ENCODE measurements at regions of chr13 and their contacts with region 1.

Region 1: DNA sequence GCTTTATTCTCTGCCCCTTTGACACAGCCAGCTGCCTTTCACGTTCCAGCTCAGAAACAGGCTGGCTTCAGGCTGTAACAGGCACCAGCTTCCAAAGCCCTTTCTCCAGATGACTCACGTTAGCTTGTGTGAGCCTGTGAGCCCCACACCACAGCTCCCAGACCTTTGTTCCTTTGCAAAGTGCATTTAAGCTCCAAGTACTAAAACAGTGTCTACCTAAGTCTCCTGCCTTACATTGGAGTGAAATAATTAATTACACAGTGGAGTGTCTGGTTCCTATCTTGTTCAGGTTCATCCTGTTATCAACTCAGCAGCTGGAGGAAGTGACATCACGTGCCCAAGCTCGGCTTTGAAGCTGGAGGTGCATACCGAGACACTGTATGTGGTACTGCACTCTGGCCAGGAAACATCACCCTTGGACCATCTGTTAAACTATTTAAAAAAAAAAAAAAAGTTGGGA is 475.8 kb downstream of the FOXO1 start:
- DNase-seq: peak in 4 of 5 donors; percentile 30 to 65 (median 49)
- ATAC-seq: peak; percentile 43 to 72 (median 58)
- H3K4me3 ChIP-seq: no peak overlapping the region
- H3K27ac ChIP-seq: peak overlapping the region; percentile 36 to 84 (median 70)
- H3K4me1 ChIP-seq: peaks cover 5 to 52% (median 39%) of the 10 kb centered on the region in 12 donors
- H3K27me3 ChIP-seq: no peaks in the 10 kb centered on the region
- CTCF ChIP-seq: no peak
- POLR2A ChIP-seq: no peak

Region 2: DNA sequence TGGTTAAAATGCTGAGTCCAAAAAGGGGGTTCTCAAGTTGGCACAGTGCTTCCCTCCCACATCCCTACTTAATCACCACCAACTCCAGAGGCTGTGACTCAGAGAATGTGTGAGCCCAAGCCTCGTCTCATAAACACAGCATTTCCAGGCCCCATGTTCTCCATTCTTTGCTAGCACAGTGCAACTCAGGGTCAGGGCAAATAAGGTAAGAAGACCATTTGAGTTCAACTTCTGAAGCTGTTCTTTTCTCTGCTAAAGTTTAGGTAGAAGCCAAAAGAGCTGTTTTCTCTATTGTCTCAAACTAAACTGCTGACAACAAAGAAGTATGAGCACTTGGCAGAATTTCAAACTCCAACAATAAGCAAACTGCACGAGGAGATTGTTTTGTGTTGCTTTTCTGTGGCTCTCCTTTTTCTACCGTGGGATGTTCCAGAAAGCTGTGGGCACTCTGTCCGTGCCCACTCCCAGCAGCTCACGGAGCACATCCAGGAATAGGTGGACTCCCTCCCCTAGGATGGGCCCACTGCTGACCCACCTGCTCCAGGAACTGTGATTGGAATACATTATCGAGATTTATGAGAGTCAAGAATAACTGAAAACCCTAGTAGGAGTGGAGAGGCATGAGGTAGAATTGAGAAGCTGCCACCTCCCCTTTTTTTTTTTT is 40.9 kb before region 1 on chr13:
- intact Hi-C with region 1: loop called in 3 of 10 experiments (anchors 2 to 5 kb)
- DNase-seq: peak in 2 of 5 donors; percentile 39 to 40
- ATAC-seq: peak; percentile 76 to 90 (median 86)
- H3K4me3 ChIP-seq: no peak overlapping the region
- H3K27ac ChIP-seq: peak overlapping the region in 10 of 12 donors; percentile 26 to 68 (median 54)
- H3K4me1 ChIP-seq: peaks cover 0 to 32% (median 11%) of the 10 kb centered on the region in 12 donors
- H3K27me3 ChIP-seq: no peaks in the 10 kb centered on the region
- CTCF ChIP-seq: no peak
- POLR2A ChIP-seq: no peak

Region 3: DNA sequence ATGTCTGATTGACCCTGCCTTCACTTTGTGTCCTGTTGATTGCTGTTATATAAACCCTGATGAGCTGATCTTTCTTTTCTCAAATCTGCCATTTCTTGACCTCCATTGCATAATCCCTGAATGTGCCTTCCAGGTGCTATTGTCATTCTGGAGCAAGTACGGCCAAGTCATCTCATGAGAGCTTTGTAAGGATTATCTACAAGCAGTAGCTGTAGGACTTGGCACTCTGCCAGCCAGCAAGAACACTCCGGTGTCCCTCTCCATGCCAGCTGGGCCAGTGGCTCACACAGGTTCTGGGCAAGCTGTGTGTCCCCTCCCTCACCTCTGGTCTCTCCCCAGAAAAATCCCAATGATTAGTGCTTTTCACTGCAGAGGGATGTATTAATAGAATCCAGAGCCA is 127.7 kb after region 1 on chr13:
- intact Hi-C with region 1: loop called in 3 of 10 experiments (anchors 1 to 10 kb)
- DNase-seq: peak; percentile 56 to 81 (median 70)
- ATAC-seq: peak in 3 of 4 donors; percentile 43 to 63 (median 62)
- H3K4me3 ChIP-seq: no peak overlapping the region
- H3K27ac ChIP-seq: no peak overlapping the region
- H3K4me1 ChIP-seq: peaks cover 0 to 27% (median 14%) of the 10 kb centered on the region in 12 donors
- H3K27me3 ChIP-seq: no peaks in the 10 kb centered on the region
- CTCF ChIP-seq: no peak
- POLR2A ChIP-seq: no peak

Region 4: DNA sequence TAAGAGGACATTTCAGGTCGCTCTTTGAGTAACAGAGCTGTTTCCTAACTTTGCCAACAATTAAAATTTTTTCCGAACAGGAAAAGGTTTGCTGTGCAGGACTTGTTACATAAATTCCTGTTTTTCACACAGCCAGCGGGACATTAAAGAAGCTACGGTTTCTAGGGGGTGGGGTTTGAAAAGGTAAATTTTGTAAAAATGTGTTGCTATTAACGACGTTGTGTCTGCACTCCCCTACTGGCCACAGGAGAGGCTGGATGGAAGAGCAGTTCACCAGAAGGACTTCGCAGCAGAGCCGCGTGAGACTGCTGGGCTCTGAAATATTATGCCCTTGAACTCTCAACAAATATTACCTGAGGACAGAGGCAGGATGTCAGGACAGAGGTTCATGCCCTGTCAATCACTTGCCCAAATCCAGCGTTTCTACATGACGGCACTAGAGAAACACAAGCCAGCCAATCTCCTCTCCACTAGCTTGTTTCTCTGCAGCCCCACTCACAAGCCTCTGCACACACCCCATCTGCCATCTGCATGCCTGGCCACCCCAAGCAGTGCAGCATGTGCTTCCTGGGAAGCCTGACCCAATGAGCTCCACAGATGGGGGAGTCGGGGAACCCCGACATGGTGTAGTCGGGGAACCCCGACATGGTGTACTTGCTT is 373.8 kb after region 1 on chr13:
- intact Hi-C with region 1: loop called in 1 of 10 experiments (anchors 10 kb)
- DNase-seq: no peak
- ATAC-seq: peak; percentile 11 to 43 (median 18)
- H3K4me3 ChIP-seq: peak overlapping the region in 1 of 12 donors; percentile 13
- H3K27ac ChIP-seq: peak overlapping the region in 9 of 12 donors; percentile 4 to 59 (median 54)
- H3K4me1 ChIP-seq: peaks cover 9 to 87% (median 59%) of the 10 kb centered on the region in 12 donors
- H3K27me3 ChIP-seq: no peaks in the 10 kb centered on the region
- CTCF ChIP-seq: peak in 3 of 12 donors; percentile 18 to 28 (median 24)
- POLR2A ChIP-seq: no peak